A549 (cell line): ENCODE measurements at regions of chr15 and their contacts with region 1.

Region 1: DNA sequence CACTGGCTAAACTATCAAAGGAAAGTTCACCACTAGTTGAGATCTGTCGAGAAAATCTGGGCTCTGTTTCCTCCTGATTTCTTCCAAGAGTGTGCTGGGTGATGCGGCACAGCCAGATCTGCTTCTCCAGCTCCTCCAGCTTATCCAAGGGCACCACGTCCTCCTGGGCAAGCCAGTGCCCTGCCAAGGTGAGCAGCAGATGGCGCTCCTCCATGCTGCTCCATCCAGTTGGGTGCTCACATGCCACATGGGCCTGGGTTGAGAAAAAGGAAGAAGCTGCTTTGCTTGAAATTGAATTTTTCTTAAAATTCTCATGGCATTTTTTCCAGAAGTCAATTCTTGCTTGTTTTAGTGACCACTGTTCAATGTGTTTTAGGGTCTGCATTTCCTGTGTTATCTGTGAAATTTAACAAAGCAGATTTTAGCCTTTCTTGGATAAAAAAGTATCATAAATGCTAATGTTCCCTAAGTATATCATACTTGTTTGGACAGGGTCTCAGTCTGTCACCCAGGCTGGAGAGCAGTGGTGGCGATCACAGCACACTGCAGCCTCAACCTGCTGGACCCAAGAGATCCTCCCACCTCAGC is 47.3 kb downstream of the EIF3J start:
- DNase-seq: peak; percentile 23 to 62
- ATAC-seq: peak; percentile 98 to 99
- H3K4me3 ChIP-seq: no peak overlapping the region
- H3K27ac ChIP-seq: no peak overlapping the region
- H3K4me1 ChIP-seq: no peaks in the 10 kb centered on the region
- CTCF ChIP-seq: peak; percentile 50
- EP300 ChIP-seq: no peak
- POLR2A ChIP-seq: no peak
- RAD21 ChIP-seq: peak; percentile 18 to 30; a peak in 2 of 5 replicates

Region 2: DNA sequence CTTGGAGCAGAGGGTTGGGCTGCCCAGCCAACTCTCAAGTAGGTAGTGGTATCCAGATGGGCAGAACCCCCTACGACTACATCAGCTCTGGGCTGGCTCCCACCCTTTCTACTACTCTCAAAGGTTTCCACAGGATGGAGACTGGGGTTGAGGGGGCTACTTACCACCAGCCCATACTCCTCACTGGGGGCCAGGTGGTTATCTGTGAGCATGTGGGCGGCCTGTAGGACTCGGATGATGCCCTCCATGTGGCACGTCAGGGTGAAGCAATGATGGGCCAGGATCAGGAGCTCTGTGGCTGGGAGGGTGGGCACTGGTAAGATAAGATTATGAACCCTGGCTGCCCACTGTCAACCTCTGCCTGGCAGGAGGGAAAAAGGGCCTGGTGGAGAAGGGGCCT is 13.9 kb before region 1 on chr15:
- CTCF ChIA-PET with region 1: interaction called, 22 read pairs
- POLR2A ChIA-PET with region 1: no interaction called
- DNase-seq: no peak
- ATAC-seq: peak in 1 of 2 experiments; percentile 13; a peak in 3 of 6 replicates
- H3K4me3 ChIP-seq: no peak overlapping the region
- H3K27ac ChIP-seq: no peak overlapping the region
- H3K4me1 ChIP-seq: no peaks in the 10 kb centered on the region
- CTCF ChIP-seq: no peak
- EP300 ChIP-seq: no peak
- POLR2A ChIP-seq: no peak
- RAD21 ChIP-seq: no peak

Region 3: DNA sequence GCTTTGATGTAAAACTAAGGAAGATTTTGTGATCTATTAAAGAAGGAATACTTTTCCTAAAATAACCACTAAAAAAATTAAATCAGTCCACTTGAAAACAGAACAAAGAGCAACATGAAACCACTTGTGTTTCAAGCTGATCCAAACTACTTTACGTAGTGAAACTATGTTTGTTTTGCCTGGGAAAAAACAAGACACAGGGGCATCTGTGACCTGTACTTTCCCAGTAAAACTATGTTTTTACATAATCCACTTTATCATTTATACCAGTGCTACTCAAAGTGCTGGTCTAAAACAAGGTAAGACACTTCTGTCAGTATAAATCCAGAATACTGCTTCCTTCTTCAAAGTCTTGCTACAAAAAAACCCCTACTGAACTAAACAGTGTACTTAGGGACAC is 22.5 kb after region 1 on chr15:
- CTCF ChIA-PET with region 1: interaction called, 11 read pairs
- POLR2A ChIA-PET with region 1: no interaction called
- DNase-seq: no peak
- ATAC-seq: no peak
- H3K4me3 ChIP-seq: no peak overlapping the region
- H3K27ac ChIP-seq: no peak overlapping the region
- H3K4me1 ChIP-seq: no peaks in the 10 kb centered on the region
- CTCF ChIP-seq: no peak
- EP300 ChIP-seq: no peak
- POLR2A ChIP-seq: no peak
- RAD21 ChIP-seq: no peak

Region 4: GRCh38 chr15:44738340-44738984 is 154.2 kb after region 1 on chr15:
- CTCF ChIA-PET with region 1: interaction called, 22 read pairs
- POLR2A ChIA-PET with region 1: no interaction called
- DNase-seq: peak; percentile 21 to 43
- ATAC-seq: no peak
- H3K4me3 ChIP-seq: no peak overlapping the region
- H3K27ac ChIP-seq: no peak overlapping the region
- H3K4me1 ChIP-seq: no peaks in the 10 kb centered on the region
- CTCF ChIP-seq: peak; percentile 68
- EP300 ChIP-seq: no peak
- POLR2A ChIP-seq: no peak
- RAD21 ChIP-seq: peak; percentile 76 to 79